ENCODE measurements at regions of chr3 and their contacts with region 1.

Region 1: GRCh38 chr3:127822698-127823425 is 547 bp upstream of the MGLL start:
- DNase-seq: no peak
- H3K4me3 ChIP-seq: peak overlapping the region; percentile 89 to 96 (median 94)
- H3K27ac ChIP-seq: peak overlapping the region; percentile 86 to 92 (median 86)
- H3K4me1 ChIP-seq: peaks cover 30 to 55% (median 46%) of the 10 kb centered on the region in 4 donors
- H3K27me3 ChIP-seq: no peaks in the 10 kb centered on the region
- CTCF ChIP-seq: peak in 1 of 3 experiments; percentile 80
- EP300 ChIP-seq: no peak
- POLR2A ChIP-seq: peak; percentile 16

Region 2: GRCh38 chr3:126982471-126983175 is 840.2 kb before region 1 on chr3 and contains the start of gene PLXNA1:
- intact Hi-C with region 1: no loop called
- DNase-seq: no peak
- H3K4me3 ChIP-seq: peak within 1 kb of the TSS; percentile 68 to 92 (median 84)
- H3K27ac ChIP-seq: peak within 1 kb of the TSS; percentile 76 to 85 (median 80)
- H3K4me1 ChIP-seq: peaks cover 24 to 52% (median 44%) of the 10 kb centered on the region in 4 donors
- H3K27me3 ChIP-seq: peaks cover 0 to 13% (median 0%) of the 10 kb centered on the region in 4 donors
- CTCF ChIP-seq: peak; percentile 83 to 91 (median 85)
- EP300 ChIP-seq: no peak
- POLR2A ChIP-seq: no peak
- total RNA-seq, gene PLXNA1: 33.6 to 82.4 (median 47.0) TPM

Region 3: GRCh38 chr3:127747723-127748521 is 74.9 kb before region 1 on chr3:
- intact Hi-C with region 1: loop called (anchors 5 kb)
- DNase-seq: no peak
- H3K4me3 ChIP-seq: no peak overlapping the region
- H3K27ac ChIP-seq: peak overlapping the region; percentile 68 to 79 (median 76)
- H3K4me1 ChIP-seq: peaks cover 63 to 84% (median 83%) of the 10 kb centered on the region in 4 donors
- H3K27me3 ChIP-seq: no peaks in the 10 kb centered on the region
- CTCF ChIP-seq: peak; percentile 5 to 8 (median 6)
- EP300 ChIP-seq: no peak
- POLR2A ChIP-seq: no peak

Region 4: DNA sequence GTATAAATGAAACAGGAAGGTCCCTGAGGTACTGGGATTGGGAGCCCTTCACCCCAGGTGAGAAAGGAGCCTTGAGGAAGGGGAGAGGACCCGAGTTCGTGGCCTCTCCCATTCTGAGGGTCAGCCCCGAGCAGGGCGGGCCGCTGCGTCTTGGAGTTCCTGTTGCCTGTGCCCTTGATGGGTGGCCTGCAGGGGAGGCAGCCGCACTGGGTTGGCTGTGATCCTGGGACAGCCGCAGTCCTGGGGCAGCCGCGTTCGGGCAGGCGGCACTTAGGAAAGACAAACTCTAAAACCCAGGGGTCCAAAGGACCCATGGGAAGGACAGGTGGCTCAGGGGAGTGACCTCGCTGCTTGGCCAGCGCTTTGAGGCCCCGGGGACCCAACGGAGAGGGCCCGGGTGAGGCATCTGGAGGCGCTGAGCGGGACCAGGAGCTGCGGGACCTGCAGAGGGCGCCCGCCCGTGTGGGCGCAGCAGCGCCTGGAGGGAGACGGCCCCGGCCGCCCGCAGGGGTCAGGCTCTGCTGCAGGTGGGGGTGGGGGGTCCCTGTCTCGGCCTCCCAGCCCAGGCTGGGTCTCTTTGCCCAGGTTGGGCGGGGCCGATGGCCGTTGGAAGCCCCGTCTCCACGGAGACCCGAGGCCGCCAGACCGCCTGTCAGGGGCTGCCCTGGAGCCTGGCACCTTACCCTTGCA is 1520.9 kb after region 1 on chr3:
- intact Hi-C with region 1: no loop called
- DNase-seq: no peak
- H3K4me3 ChIP-seq: peak overlapping the region; percentile 40 to 52 (median 43)
- H3K27ac ChIP-seq: no peak overlapping the region
- H3K4me1 ChIP-seq: peaks cover 13 to 27% (median 25%) of the 10 kb centered on the region in 4 donors
- H3K27me3 ChIP-seq: peaks cover 0 to 27% (median 1%) of the 10 kb centered on the region in 4 donors
- CTCF ChIP-seq: peak in 2 of 3 experiments; percentile 35 to 58
- EP300 ChIP-seq: no peak
- POLR2A ChIP-seq: no peak